Activated naive CD4-positive, alpha-beta T cell treated with anti-CD3 and anti-CD28 coated beads for 36 hours (primary cell): ENCODE measurements at regions of chr2 and their contacts with region 1.

Region 1: DNA sequence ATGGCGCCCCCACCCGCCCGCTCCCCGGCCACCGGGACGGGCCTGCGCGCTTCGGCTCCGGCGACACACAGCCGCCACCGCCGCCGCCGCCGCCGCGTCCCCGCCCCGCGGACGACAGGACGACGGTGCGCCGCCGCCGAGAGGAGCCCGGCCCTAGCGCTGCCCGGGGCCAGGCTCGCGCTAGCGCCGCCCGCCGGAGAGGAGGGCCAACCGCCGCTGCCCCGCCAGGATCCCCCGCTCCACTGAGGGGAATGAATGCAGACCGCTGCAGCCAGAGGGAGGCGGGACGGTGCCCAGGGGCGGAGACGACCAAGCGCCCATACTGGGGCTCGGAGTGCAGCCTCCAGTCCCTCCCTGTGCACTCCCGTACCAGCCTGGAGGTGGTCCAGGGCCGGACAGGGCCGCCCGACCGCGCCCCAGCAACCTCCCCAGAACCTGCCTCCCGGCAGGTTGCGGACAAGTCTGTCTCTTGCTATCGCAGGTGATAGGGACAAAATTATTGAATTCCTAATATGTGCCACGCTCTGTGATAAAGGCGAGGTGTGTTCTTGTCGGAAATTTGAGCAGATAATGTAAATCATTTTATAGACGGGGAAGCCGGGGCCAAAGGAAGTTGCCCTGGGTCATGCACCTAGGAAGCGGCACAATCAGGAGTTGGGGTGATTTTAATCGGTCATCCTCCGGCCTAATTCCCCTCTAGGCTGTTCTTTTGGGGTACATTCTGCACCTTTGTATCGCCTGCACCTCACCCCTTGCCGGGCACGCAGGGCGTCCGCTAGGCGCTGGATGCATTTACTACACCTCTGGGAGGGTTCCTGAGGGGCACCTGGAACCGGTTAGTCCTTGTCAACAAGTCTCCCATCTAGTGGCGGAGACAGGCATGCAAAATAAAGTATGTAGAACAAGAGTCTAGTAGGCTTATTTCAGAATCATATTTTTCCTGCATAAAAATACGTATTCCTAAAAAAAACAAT is at the start of gene TEX261:
- DNase-seq: peak; percentile 91
- H3K4me3 Mint-ChIP-seq: peak within 1 kb of the TSS; percentile 94
- H3K27ac Mint-ChIP-seq: peak within 1 kb of the TSS; percentile 89
- H3K4me1 Mint-ChIP-seq: peaks cover 33% of the 10 kb centered on the region
- H3K27me3 Mint-ChIP-seq: no peaks in the 10 kb centered on the region
- total RNA-seq, gene TEX261: 17.8 to 18.7 TPM

Region 2: GRCh38 chr2:70977605-70978205 is 17.3 kb before region 1 on chr2:
- CTCF ChIA-PET with region 1: interaction called, 5 read pairs
- intact Hi-C with region 1: loop called (anchors 1 kb)
- DNase-seq: peak; percentile 63
- H3K4me3 Mint-ChIP-seq: peak overlapping the region; percentile 72
- H3K27ac Mint-ChIP-seq: no peak overlapping the region
- H3K4me1 Mint-ChIP-seq: peaks cover 13% of the 10 kb centered on the region
- H3K27me3 Mint-ChIP-seq: no peaks in the 10 kb centered on the region

Region 3: DNA sequence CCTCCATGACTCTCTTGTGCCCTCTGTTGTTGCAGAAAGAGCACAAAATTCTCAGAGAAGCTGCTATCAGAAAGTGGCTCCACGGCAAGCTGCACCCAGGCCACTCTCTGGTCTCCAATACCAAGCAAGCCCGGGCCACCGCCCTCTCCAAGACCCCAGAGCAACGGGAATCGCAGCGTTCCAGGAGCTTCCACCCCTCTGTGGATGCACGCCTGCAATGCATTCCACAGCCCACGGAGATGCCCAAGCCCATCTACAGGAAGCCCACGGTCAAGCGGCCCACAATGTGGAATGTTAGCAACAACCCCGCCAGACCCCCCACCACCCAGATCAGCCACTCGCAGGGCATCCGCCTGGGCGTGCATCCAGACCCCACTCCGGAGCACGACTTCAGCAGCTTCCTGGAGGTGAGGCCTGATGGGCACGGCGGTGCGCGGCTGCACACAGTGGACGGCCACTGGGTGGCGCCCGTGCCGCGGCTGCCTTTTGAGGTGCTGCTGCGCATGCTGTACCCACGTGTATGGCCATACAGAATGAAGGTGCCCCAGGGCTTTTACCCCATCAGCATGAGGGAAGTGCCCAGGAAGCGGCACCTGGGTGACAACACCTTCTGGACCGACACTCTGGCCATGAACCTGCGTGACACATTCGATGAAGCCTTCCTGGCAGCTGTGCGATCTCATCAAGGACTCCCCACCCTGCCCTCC is 10.3 kb before region 1 on chr2:
- CTCF ChIA-PET with region 1: interaction called, 27 read pairs
- intact Hi-C with region 1: loop called (anchors 1 kb)
- DNase-seq: peak; percentile 88
- H3K4me3 Mint-ChIP-seq: no peak overlapping the region
- H3K27ac Mint-ChIP-seq: no peak overlapping the region
- H3K4me1 Mint-ChIP-seq: peaks cover 15% of the 10 kb centered on the region
- H3K27me3 Mint-ChIP-seq: no peaks in the 10 kb centered on the region

Region 4: GRCh38 chr2:71130113-71130904 is 135.3 kb after region 1 on chr2 and contains the starts of genes MCEE and MPHOSPH10:
- CTCF ChIA-PET with region 1: no interaction called
- intact Hi-C with region 1: loop called (anchors 1 kb)
- DNase-seq: peak; percentile 94
- H3K4me3 Mint-ChIP-seq: no peak within 1 kb of the TSS
- H3K27ac Mint-ChIP-seq: no peak within 1 kb of the TSS
- H3K4me1 Mint-ChIP-seq: peaks cover 16% of the 10 kb centered on the region
- H3K27me3 Mint-ChIP-seq: no peaks in the 10 kb centered on the region
- total RNA-seq, gene MCEE: 14.0 to 15.8 TPM
- total RNA-seq, gene MPHOSPH10: 27.0 to 32.3 TPM